Transverse colon (tissue), 4 donors: ENCODE measurements at regions of chr4 and their contacts with region 1.

Region 1: DNA sequence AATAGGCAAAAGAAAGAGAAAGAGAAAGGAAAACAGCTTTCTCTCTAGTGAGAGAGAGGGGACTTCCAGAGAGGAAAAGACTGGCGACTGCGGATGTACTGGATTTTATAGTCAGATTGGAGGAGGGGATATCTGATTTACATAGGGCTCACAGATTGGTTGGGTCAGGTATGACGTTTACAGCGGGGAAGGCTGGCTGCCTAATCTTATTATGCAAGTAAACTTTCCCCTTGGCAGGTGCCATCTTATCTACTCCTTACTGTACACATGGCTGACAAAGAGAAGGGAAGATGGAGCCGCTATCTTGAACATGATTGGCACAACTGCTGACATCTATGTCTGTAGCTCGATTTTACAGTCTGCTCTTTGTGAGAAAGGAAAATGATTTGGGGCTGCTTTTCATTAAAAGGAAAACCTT is 25.4 kb downstream of the RBPJ start:
- DNase-seq: no peak
- H3K4me3 ChIP-seq: no peak overlapping the region
- H3K27ac ChIP-seq: no peak overlapping the region
- H3K4me1 ChIP-seq: peaks cover 0 to 62% (median 1%) of the 10 kb centered on the region in 4 donors
- H3K27me3 ChIP-seq: no peaks in the 10 kb centered on the region
- CTCF ChIP-seq: no peak
- EP300 ChIP-seq: no peak
- POLR2A ChIP-seq: no peak

Region 2: GRCh38 chr4:25813448-25814106 is 532.6 kb before region 1 on chr4:
- in situ Hi-C with region 1: no loop called
- intact Hi-C with region 1: loop called (anchors 5 kb)
- DNase-seq: no peak
- H3K4me3 ChIP-seq: no peak overlapping the region
- H3K27ac ChIP-seq: no peak overlapping the region
- H3K4me1 ChIP-seq: peaks cover 0 to 7% (median 0%) of the 10 kb centered on the region in 4 donors
- H3K27me3 ChIP-seq: no peaks in the 10 kb centered on the region
- CTCF ChIP-seq: no peak
- EP300 ChIP-seq: no peak
- POLR2A ChIP-seq: no peak

Region 3: DNA sequence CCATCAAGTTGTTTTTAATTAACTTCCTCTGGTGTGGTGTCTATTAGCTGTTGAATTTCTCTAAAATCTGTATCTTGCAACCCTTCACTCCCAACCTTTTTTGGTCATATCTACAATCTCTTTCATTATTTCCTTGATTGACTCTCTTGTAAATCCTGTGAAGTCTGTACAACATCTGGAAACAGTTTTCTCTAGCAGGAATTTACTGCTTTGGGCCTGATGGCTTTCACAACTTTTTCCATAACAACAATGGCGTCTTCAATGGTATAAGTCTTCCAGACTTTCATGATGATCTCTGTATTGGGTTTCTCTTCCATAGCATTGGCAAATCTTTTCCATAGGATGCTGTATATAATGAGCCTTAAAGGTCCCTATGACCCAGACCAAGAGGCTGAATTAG is 286.7 kb after region 1 on chr4:
- in situ Hi-C with region 1: no loop called
- intact Hi-C with region 1: no loop called
- DNase-seq: no peak
- H3K4me3 ChIP-seq: no peak overlapping the region
- H3K27ac ChIP-seq: no peak overlapping the region
- H3K4me1 ChIP-seq: no peaks in the 10 kb centered on the region
- H3K27me3 ChIP-seq: no peaks in the 10 kb centered on the region
- CTCF ChIP-seq: no peak
- EP300 ChIP-seq: no peak
- POLR2A ChIP-seq: no peak